Gastrocnemius medialis (tissue), 4 donors: ENCODE measurements at regions of chr10 and their contacts with region 1.

Region 1: DNA sequence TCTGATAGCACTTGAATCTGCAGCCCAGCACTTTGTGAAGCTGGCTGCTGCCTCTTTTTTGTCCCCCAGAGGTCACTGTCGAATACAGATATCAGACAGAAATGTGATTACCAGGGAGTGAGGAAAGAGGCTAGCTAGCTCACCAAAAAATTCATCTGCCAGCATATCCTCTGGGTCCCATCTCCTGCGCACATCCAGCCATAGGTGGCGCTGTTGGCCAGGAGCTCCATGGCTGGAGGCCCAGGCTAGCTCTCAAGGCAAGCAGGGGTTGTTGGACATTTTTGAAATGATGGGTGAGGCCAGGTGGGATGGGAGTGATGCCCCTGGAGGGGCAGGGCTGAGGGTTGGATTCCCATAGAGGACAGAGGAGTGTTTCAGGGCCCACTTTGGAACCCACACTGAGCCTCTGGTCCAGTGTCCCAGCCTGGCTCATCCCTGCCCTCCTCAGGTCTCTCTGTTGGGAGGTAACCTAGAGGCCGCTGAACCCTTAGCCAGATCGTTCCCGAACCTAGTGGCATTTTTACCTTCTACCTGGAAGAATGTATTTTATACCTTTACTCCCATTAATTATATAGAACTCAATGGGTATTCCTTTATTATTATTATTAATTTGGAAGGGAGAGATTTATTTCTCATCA is 14.8 kb downstream of the DPCD start:
- DNase-seq: peak; percentile 18 to 61
- ATAC-seq: peak; percentile 84 to 85
- H3K4me3 ChIP-seq: no peak overlapping the region
- H3K27ac ChIP-seq: no peak overlapping the region
- H3K4me1 ChIP-seq: no peaks in the 10 kb centered on the region
- H3K27me3 ChIP-seq: no peaks in the 10 kb centered on the region
- CTCF ChIP-seq: peak; percentile 68 to 87 (median 80)
- POLR2A ChIP-seq: no peak

Region 2: DNA sequence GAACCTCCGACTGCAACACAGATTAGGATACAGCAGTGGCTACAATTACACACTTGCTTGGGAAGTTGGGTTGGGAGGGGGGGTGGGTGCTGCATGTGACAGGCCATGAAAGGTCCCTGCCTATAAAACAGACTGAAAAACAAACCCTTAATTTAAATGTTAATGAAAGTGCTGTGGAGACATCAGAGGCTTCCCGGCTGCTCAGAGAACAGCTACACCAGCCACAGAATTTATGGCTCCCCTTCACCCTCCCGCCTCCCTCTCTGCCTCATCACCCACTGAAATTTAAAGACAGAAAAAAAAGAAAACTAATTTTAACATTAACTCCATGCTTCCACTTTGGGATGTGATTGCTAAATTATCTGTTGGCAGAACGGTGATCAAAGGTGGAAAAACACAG is 57.4 kb after region 1 on chr10:
- in situ Hi-C with region 1: no loop called
- intact Hi-C with region 1: no loop called
- DNase-seq: no peak
- ATAC-seq: no peak
- H3K4me3 ChIP-seq: no peak overlapping the region
- H3K27ac ChIP-seq: no peak overlapping the region
- H3K4me1 ChIP-seq: no peaks in the 10 kb centered on the region
- H3K27me3 ChIP-seq: no peaks in the 10 kb centered on the region
- CTCF ChIP-seq: no peak
- POLR2A ChIP-seq: no peak

Region 3: GRCh38 chr10:101693978-101694673 is 91.2 kb after region 1 on chr10:
- in situ Hi-C with region 1: no loop called
- intact Hi-C with region 1: loop called (anchors 10 kb)
- DNase-seq: peak; percentile 9 to 31
- ATAC-seq: peak; percentile 74 to 75
- H3K4me3 ChIP-seq: peak overlapping the region; percentile 71 to 97 (median 90)
- H3K27ac ChIP-seq: peak overlapping the region; percentile 87 to 96 (median 94)
- H3K4me1 ChIP-seq: peaks cover 23 to 45% of the 10 kb centered on the region in 2 donors
- H3K27me3 ChIP-seq: no peaks in the 10 kb centered on the region
- CTCF ChIP-seq: no peak
- POLR2A ChIP-seq: peak in 1 of 2 donors; percentile 5

Region 4: GRCh38 chr10:101782811-101783735 is 180.2 kb after region 1 on chr10 and contains the start of gene NPM3:
- in situ Hi-C with region 1: loop called in 2 of 4 experiments (anchors 10 kb)
- intact Hi-C with region 1: loop called (anchors 1 kb)
- DNase-seq: peak; percentile 68 to 73
- ATAC-seq: peak; percentile 67 to 77
- H3K4me3 ChIP-seq: peak within 1 kb of the TSS; percentile 68 to 85 (median 76)
- H3K27ac ChIP-seq: peak within 1 kb of the TSS; percentile 14 to 76 (median 65)
- H3K4me1 ChIP-seq: peaks cover 23 to 31% of the 10 kb centered on the region in 2 donors
- H3K27me3 ChIP-seq: peaks cover 13 to 18% (median 16%) of the 10 kb centered on the region in 3 donors
- CTCF ChIP-seq: no peak
- POLR2A ChIP-seq: peak in 1 of 2 donors; percentile 14
- total RNA-seq, gene NPM3: 12.9 to 37.0 (median 16.0) TPM